Ascending aorta (tissue), 2 donors: ENCODE measurements at regions of chrX and their contacts with region 1.

Region 1: GRCh38 chrX:20442597-20442996 is 175.9 kb upstream of the RPS6KA3 start:
- DNase-seq: peak in 1 of 2 donors; percentile 82
- H3K4me3 ChIP-seq: no peak overlapping the region
- H3K27ac ChIP-seq: no peak overlapping the region
- H3K4me1 ChIP-seq: no peaks in the 10 kb centered on the region
- H3K27me3 ChIP-seq: no peaks in the 10 kb centered on the region
- CTCF ChIP-seq: peak; percentile 38 to 52 (median 45)

Region 2: GRCh38 chrX:20252381-20253231 is 190.0 kb before region 1 on chrX:
- intact Hi-C with region 1: loop called (anchors 2 kb)
- DNase-seq: peak in 1 of 2 donors; percentile 65
- H3K4me3 ChIP-seq: no peak overlapping the region
- H3K27ac ChIP-seq: no peak overlapping the region
- H3K4me1 ChIP-seq: no peaks in the 10 kb centered on the region
- H3K27me3 ChIP-seq: no peaks in the 10 kb centered on the region
- CTCF ChIP-seq: peak in 2 of 3 experiments; percentile 23 to 44

Region 3: DNA sequence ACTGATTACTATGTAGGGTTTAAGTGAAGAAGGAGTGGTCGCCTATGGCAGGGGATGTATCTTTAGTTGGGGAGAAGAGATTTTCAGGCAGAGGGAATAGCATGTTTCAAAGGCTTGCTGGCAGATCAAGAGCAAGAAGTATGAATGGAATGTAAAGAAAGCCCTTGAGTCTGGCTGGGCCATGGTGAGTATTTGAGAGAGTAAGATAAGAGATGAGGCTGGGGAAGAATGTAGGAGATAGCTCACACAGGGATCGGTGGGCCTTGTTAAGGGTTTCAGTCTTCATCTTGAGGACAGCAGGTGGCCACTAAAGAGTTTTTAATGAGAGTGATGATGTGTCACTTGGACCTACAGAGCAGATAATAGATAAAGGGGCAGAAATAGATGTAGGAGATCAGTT is 143.2 kb after region 1 on chrX:
- intact Hi-C with region 1: no loop called
- DNase-seq: no peak
- H3K4me3 ChIP-seq: no peak overlapping the region
- H3K27ac ChIP-seq: no peak overlapping the region
- H3K4me1 ChIP-seq: no peaks in the 10 kb centered on the region
- H3K27me3 ChIP-seq: no peaks in the 10 kb centered on the region
- CTCF ChIP-seq: no peak

Region 4: GRCh38 chrX:21150208-21150607 is 707.6 kb after region 1 on chrX:
- intact Hi-C with region 1: no loop called
- DNase-seq: no peak
- H3K4me3 ChIP-seq: no peak overlapping the region
- H3K27ac ChIP-seq: no peak overlapping the region
- H3K4me1 ChIP-seq: no peaks in the 10 kb centered on the region
- H3K27me3 ChIP-seq: no peaks in the 10 kb centered on the region
- CTCF ChIP-seq: no peak